ENCODE measurements at regions of chr11 and their contacts with region 1.

Region 1: DNA sequence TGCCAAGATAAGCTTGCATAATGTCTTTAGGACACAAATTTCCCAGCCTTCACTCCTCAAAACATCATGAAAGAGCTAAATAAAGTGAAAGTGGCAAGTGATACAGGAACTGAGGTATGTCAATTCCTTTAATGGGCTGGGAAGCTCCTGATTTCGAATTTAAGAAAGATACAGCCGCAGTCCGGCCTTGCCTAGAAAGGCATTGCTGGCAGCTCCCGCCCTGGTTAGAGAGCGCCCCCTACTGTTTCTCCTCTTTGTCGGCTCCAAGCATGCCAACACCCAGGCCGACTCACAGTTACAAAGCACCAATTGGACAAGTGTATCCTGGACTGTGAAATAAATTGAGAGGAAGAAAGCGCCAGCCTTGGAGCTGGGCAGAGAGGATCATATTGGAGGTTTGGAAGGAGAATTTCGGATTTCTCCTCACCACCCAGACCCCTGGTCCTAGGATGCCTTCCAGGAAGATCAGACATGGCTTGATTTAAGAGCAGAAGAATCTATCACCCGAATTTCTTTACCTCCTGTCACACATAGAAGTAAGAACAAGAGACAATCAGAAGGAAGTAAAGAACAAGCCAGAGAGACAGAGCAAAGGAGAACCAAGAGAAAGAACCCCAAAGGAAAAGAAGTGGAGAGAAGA is 84.0 kb downstream of the FAM76B start:
- DNase-seq: peak; percentile 73
- H3K4me3 ChIP-seq: no peak overlapping the region
- H3K27ac ChIP-seq: no peak overlapping the region
- H3K27me3 ChIP-seq: peaks cover 3% of the 10 kb centered on the region
- CTCF ChIP-seq: peak; percentile 99

Region 2: DNA sequence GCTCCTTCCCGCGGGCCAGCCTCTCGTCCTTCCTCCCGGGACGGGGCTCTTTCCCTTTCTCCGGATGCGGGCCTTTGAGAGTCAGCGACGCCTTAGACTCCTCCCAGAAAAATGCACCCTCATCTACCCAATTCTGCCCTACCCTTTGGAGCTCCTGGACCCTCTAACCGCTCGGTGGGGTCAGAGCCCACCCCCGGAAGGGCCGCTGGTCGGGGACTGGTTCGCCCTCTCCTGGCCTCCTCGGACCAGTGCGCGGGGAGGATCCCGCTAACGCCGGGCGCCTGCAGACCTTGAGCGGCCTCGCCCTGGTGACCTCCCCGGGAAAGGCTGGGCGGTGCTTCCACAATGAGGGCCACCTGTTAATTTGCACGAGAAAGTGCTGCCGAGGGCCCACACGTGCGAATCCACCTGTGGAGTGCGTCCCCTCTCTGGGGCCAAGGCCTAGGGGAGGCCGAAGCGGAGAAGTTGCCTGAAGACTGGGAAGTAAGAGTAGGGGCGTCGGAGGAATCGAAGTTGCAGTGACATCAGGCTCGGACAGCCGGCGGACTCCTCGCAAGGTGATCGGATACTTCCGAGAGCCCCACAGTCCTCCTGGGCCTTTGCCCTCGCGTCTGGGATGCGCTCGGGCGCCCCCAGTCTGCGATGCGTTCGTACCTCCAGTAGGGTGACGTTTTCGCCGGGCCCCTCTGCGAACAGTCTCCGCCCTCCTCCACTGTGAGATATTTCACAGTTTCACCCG is 554.5 kb before region 1 on chr11:
- CTCF ChIA-PET with region 1: interaction called, 239 read pairs
- POLR2A ChIA-PET with region 1: no interaction called
- DNase-seq: peak; percentile 66
- H3K4me3 ChIP-seq: peak overlapping the region; percentile 51
- H3K27ac ChIP-seq: no peak overlapping the region
- H3K27me3 ChIP-seq: no peaks in the 10 kb centered on the region
- CTCF ChIP-seq: peak; percentile 78

Region 3: GRCh38 chr11:95231127-95231880 is 474.3 kb before region 1 on chr11 and contains the start of gene SESN3:
- CTCF ChIA-PET with region 1: interaction called, 13 read pairs
- POLR2A ChIA-PET with region 1: no interaction called
- DNase-seq: peak; percentile 90
- H3K4me3 ChIP-seq: peak within 1 kb of the TSS; percentile 59
- H3K27ac ChIP-seq: peak within 1 kb of the TSS; percentile 42
- H3K27me3 ChIP-seq: peaks cover 23% of the 10 kb centered on the region
- CTCF ChIP-seq: no peak
- polyA plus RNA-seq, gene SESN3: 2.8 and 4.2 TPM in 2 replicates

Region 4: GRCh38 chr11:95512682-95513081 is 192.9 kb before region 1 on chr11:
- CTCF ChIA-PET with region 1: interaction called, 11 read pairs
- POLR2A ChIA-PET with region 1: no interaction called
- DNase-seq: peak; percentile 71
- H3K4me3 ChIP-seq: no peak overlapping the region
- H3K27ac ChIP-seq: no peak overlapping the region
- H3K27me3 ChIP-seq: no peaks in the 10 kb centered on the region
- CTCF ChIP-seq: no peak

Region 5: GRCh38 chr11:95680169-95680929 is 25.3 kb before region 1 on chr11:
- CTCF ChIA-PET with region 1: interaction called, 25 read pairs
- POLR2A ChIA-PET with region 1: no interaction called
- DNase-seq: peak; percentile 70
- H3K4me3 ChIP-seq: no peak overlapping the region
- H3K27ac ChIP-seq: no peak overlapping the region
- H3K27me3 ChIP-seq: no peaks in the 10 kb centered on the region
- CTCF ChIP-seq: no peak

Region 6: GRCh38 chr11:95725196-95725595 is 19.6 kb after region 1 on chr11:
- CTCF ChIA-PET with region 1: interaction called, 26 read pairs
- POLR2A ChIA-PET with region 1: no interaction called
- DNase-seq: no peak
- H3K4me3 ChIP-seq: no peak overlapping the region
- H3K27ac ChIP-seq: no peak overlapping the region
- H3K27me3 ChIP-seq: peaks cover 8% of the 10 kb centered on the region
- CTCF ChIP-seq: no peak

Region 7: DNA sequence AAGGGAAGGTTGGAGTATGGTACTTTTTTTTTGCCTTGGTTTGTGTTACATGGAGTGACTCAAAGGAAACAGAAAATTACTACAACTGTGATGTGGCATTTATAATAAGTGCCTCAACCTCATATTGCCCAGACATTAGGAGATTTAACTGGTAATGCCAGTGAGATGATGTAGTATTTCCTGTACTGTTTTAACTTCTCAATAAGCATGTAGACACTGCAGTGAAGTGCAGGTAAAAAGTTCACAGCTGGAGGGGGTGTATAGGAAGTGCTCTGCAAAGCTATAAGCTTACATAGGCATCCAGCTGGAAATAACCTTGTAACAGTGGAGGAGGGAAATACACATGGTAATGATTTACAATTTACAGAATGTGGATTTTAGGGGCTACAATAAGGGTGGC is 356.5 kb after region 1 on chr11:
- CTCF ChIA-PET with region 1: no interaction called
- POLR2A ChIA-PET with region 1: no interaction called
- DNase-seq: no peak
- H3K4me3 ChIP-seq: no peak overlapping the region
- H3K27ac ChIP-seq: no peak overlapping the region
- H3K27me3 ChIP-seq: no peaks in the 10 kb centered on the region
- CTCF ChIP-seq: no peak